OCI-LY7 (cell line): ENCODE measurements at regions of chr10 and their contacts with region 1.

Region 1: DNA sequence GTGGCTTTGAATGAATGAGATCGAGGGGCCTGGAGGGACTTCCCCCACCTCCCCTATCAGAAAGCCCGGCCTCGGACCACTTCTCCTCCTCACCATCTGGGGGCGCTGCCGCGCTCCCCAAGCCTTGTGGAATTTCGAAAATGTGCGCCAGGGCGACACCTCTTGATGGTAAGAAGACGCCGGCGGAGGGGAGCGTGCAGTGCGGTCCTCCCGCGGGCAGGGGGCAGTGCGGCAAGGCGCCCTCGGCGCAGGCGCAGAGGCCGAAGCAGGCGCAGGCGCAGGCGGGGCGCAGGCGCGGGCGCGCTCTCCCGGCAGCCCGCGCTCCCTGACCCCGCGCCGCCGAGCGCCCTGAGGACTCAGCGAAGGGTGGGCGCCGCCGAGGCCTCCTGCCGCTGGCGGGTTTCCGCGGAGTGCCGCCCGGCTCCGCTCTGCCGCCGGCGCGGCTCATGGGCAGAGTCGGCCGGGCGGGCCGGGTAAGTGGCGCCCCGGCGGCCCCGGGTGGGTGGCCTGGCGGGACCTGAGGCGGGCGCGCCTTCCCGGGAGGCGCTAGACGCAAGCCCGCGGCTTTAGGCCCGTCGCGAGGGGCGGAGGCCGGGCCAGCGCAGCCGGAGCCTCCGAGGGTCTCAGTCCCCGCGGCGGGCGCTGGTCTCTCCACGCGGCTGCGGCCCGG is at the start of gene RBM17:
- DNase-seq: peak; percentile 98
- H3K4me3 ChIP-seq: peak within 1 kb of the TSS; percentile 93
- H3K27ac ChIP-seq: peak within 1 kb of the TSS; percentile 83
- H3K4me1 ChIP-seq: peaks cover 71% of the 10 kb centered on the region
- CTCF ChIP-seq: peak; percentile 100
- total RNA-seq, gene RBM17: 103 and 152 TPM in 2 replicates

Region 2: GRCh38 chr10:5317547-5318107 is 771.2 kb before region 1 on chr10:
- CTCF ChIA-PET with region 1: no interaction called
- POLR2A ChIA-PET with region 1: no interaction called
- intact Hi-C with region 1: no loop called
- DNase-seq: peak; percentile 9
- H3K4me3 ChIP-seq: no peak overlapping the region
- H3K27ac ChIP-seq: no peak overlapping the region
- H3K4me1 ChIP-seq: peaks cover 7% of the 10 kb centered on the region
- CTCF ChIP-seq: no peak

Region 3: GRCh38 chr10:5813287-5814109 is 275.4 kb before region 1 on chr10 and contains the start of gene GDI2:
- CTCF ChIA-PET with region 1: no interaction called
- POLR2A ChIA-PET with region 1: no interaction called
- intact Hi-C with region 1: loop called (anchors 10 kb)
- DNase-seq: peak; percentile 99
- H3K4me3 ChIP-seq: peak within 1 kb of the TSS; percentile 94
- H3K27ac ChIP-seq: peak within 1 kb of the TSS; percentile 85
- H3K4me1 ChIP-seq: peaks cover 65% of the 10 kb centered on the region
- CTCF ChIP-seq: no peak
- total RNA-seq, gene GDI2: 265 and 270 TPM in 2 replicates

Region 4: GRCh38 chr10:6014241-6014761 is 74.6 kb before region 1 on chr10:
- CTCF ChIA-PET with region 1: interaction called, 4 read pairs
- POLR2A ChIA-PET with region 1: interaction called, 5 read pairs
- intact Hi-C with region 1: loop called (anchors 1 kb)
- DNase-seq: peak; percentile 86
- H3K4me3 ChIP-seq: peak overlapping the region; percentile 4
- H3K27ac ChIP-seq: peak overlapping the region; percentile 68
- H3K4me1 ChIP-seq: peaks cover 19% of the 10 kb centered on the region
- CTCF ChIP-seq: peak; percentile 99

Region 5: GRCh38 chr10:6068422-6068821 is 20.4 kb before region 1 on chr10:
- CTCF ChIA-PET with region 1: interaction called, 15 read pairs
- POLR2A ChIA-PET with region 1: interaction called, 40 read pairs
- intact Hi-C with region 1: loop called (anchors 1 kb)
- DNase-seq: peak; percentile 90
- H3K4me3 ChIP-seq: peak overlapping the region; percentile 47
- H3K27ac ChIP-seq: peak overlapping the region; percentile 98
- H3K4me1 ChIP-seq: peaks cover 81% of the 10 kb centered on the region
- CTCF ChIP-seq: no peak

Region 6: GRCh38 chr10:6401562-6402348 is 312.9 kb after region 1 on chr10:
- CTCF ChIA-PET with region 1: no interaction called
- POLR2A ChIA-PET with region 1: interaction called, 3 read pairs
- intact Hi-C with region 1: loop called (anchors 5 kb)
- DNase-seq: peak; percentile 88
- H3K4me3 ChIP-seq: peak overlapping the region; percentile 29
- H3K27ac ChIP-seq: no peak overlapping the region
- H3K4me1 ChIP-seq: peaks cover 40% of the 10 kb centered on the region
- CTCF ChIP-seq: peak; percentile 90